Motor neuron (in vitro differentiated cells): ENCODE measurements at regions of chrX and their contacts with region 1.

Region 1: DNA sequence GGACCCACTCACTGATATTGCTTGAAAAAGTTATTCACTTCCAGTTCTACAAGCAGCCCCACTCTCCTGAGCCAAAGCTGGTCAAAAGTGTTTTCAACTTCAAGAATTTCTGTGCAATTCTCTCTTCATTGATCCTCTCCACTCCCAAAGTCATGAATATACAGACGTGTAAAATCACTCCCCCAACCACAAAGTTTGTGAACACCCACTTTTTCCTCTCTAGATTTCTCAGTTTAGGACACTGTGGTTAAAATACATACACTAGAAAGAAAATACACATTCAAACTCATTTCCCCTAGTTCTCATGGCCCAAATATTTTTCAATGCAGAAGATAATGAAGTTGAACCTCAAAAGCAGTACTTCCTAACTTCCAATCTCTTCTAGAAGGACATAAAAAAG is 116.3 kb downstream of the MSN start:
- ATAC-seq: no peak
- H3K4me3 ChIP-seq: no peak overlapping the region
- H3K27ac ChIP-seq: no peak overlapping the region
- H3K4me1 ChIP-seq: no peaks in the 10 kb centered on the region

Region 2: GRCh38 chrX:65697915-65698796 is 85.6 kb before region 1 on chrX:
- in situ Hi-C with region 1: loop called in 1 of 9 experiments (anchors 25 kb)
- ATAC-seq: peak in 4 of 8 experiments; percentile 29 to 45 (median 39)
- H3K4me3 ChIP-seq: no peak overlapping the region
- H3K27ac ChIP-seq: no peak overlapping the region
- H3K4me1 ChIP-seq: peaks cover 0 to 3% of the 10 kb centered on the region in 2 donors

Region 3: DNA sequence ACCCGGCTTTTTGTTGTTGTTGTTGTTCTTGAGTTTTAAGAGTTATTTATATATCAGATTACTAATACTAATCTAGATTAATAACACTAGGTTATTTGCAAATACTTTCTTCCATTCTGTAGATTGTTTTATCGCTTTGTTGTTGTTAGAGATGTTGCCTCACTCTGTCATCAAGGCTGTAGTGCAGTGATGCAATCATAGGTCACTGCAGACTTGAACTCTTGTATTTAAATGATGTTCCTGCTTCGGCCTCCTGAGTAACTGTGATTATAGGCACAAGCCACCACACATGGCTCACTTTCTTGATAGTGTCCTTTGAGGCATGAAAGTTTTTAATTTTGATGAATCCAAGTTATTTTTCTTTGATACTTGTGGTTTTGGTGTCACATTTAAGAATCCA is 127.2 kb after region 1 on chrX:
- in situ Hi-C with region 1: no loop called
- ATAC-seq: no peak
- H3K4me3 ChIP-seq: no peak overlapping the region
- H3K27ac ChIP-seq: no peak overlapping the region
- H3K4me1 ChIP-seq: no peaks in the 10 kb centered on the region

Region 4: GRCh38 chrX:66039944-66040343 is 256.2 kb after region 1 on chrX and contains the start of gene VSIG4:
- in situ Hi-C with region 1: no loop called
- ATAC-seq: no peak
- H3K4me3 ChIP-seq: no peak within 1 kb of the TSS
- H3K27ac ChIP-seq: no peak within 1 kb of the TSS
- H3K4me1 ChIP-seq: no peaks in the 10 kb centered on the region
- total RNA-seq, gene VSIG4: 0.42 TPM in 1 of 8 experiments, not detected in the others